PC-9 (cell line): ENCODE measurements at regions of chr1 and their contacts with region 1.

Region 1: DNA sequence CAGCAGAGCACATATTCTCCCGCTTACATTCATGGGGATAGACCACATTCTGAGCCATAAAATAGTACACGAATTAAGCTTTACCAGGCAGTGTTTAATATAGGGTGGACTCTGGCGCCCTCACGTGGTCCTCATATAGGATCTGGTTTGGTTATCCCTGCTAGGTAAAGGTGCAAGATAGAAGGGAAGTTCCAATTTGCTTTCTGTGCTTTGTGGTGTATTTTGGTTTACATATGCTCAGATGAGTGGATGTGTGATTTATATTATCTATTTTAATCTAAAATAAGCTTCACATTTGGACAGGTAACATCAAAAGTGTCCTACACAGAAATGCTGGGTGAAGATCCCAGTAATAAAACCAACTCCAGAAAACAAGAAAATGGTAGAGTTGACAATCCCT is 3.6 kb downstream of the CR1 start:
- DNase-seq: peak; percentile 62 to 64
- H3K4me3 ChIP-seq: no peak overlapping the region
- H3K27ac ChIP-seq: no peak overlapping the region
- H3K4me1 ChIP-seq: no peaks in the 10 kb centered on the region
- H3K27me3 ChIP-seq: peaks cover 28% of the 10 kb centered on the region
- CTCF ChIP-seq: peak; percentile 87

Region 2: GRCh38 chr1:206734499-206735142 is 765.0 kb before region 1 on chr1:
- CTCF ChIA-PET with region 1: no interaction called
- POLR2A ChIA-PET with region 1: no interaction called
- intact Hi-C with region 1: loop called (anchors 1 kb)
- DNase-seq: peak in 1 of 2 experiments; percentile 37
- H3K4me3 ChIP-seq: no peak overlapping the region
- H3K27ac ChIP-seq: no peak overlapping the region
- H3K4me1 ChIP-seq: no peaks in the 10 kb centered on the region
- H3K27me3 ChIP-seq: no peaks in the 10 kb centered on the region
- CTCF ChIP-seq: peak; percentile 89

Region 3: DNA sequence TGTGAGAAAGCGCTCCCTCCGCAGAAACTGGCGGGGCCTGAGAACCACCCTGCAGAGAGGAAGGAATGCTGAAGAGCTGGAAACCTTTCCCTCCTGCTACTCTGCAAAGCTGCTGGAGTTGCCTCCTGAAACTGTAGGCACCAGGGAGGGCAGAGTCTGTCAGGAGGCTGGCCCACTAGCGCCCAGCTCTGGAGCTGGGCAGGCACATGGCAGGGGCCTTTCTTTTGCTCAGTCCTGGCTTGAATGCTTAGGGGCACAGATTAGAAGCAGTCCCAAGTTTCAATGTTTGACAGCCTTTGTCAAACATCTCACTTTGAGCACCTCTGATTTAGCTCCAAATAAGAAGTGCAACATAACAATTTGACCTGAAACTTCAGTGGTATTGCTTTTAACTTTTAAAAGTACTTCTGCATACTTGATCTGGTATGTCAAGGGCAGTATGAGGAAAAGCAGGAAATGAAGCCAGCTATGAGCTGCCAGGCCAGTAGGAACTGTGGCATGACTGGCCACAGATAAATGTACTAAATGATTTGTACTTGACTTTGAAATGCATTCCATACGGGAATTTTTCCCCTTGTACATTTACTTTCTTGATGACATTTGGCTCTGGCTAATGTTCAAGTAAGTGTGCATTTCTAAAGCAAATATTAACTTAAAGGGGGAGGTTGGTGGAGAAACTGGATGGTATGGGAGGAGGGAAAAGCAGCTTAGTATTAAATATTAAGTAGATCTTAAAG is 474.3 kb before region 1 on chr1:
- CTCF ChIA-PET with region 1: no interaction called
- POLR2A ChIA-PET with region 1: no interaction called
- intact Hi-C with region 1: no loop called
- DNase-seq: peak; percentile 80 to 90
- H3K4me3 ChIP-seq: no peak overlapping the region
- H3K27ac ChIP-seq: peak overlapping the region; percentile 97
- H3K4me1 ChIP-seq: peaks cover 90% of the 10 kb centered on the region
- H3K27me3 ChIP-seq: no peaks in the 10 kb centered on the region
- CTCF ChIP-seq: no peak

Region 4: GRCh38 chr1:207077470-207078377 is 421.8 kb before region 1 on chr1:
- CTCF ChIA-PET with region 1: no interaction called
- POLR2A ChIA-PET with region 1: no interaction called
- intact Hi-C with region 1: loop called (anchors 2 kb)
- DNase-seq: peak; percentile 61 to 67
- H3K4me3 ChIP-seq: no peak overlapping the region
- H3K27ac ChIP-seq: no peak overlapping the region
- H3K4me1 ChIP-seq: no peaks in the 10 kb centered on the region
- H3K27me3 ChIP-seq: no peaks in the 10 kb centered on the region
- CTCF ChIP-seq: peak; percentile 95

Region 5: DNA sequence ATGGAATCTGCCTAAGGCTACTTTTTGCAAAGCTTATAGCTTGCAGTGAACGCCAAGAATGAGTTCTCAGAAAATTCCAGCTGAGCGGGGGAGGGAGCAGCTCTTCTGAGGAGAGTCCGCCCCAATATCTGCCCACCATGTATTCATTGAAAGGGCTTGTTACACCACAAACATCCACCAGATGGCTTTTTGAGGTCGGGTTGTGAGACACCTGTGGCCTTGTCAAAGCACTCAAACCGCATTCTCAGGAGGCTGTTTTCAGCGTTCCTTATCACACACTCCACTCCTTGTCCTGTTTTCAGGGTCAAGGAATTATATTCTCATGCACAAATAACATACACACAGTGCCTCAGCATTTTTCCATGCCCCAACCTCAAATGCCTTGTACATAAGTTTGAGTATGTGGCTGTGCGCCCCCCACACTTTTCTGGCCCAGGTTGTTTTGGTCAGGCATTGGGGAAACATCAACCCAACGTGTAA is 414.8 kb before region 1 on chr1:
- CTCF ChIA-PET with region 1: interaction called, 4 read pairs
- POLR2A ChIA-PET with region 1: no interaction called
- intact Hi-C with region 1: loop called (anchors 2 kb)
- DNase-seq: peak; percentile 55 to 59
- H3K4me3 ChIP-seq: no peak overlapping the region
- H3K27ac ChIP-seq: no peak overlapping the region
- H3K4me1 ChIP-seq: peaks cover 30% of the 10 kb centered on the region
- H3K27me3 ChIP-seq: no peaks in the 10 kb centered on the region
- CTCF ChIP-seq: peak; percentile 76

Region 6: GRCh38 chr1:207181838-207182237 is 317.7 kb before region 1 on chr1:
- CTCF ChIA-PET with region 1: no interaction called
- POLR2A ChIA-PET with region 1: no interaction called
- intact Hi-C with region 1: loop called (anchors 5 kb)
- DNase-seq: no peak
- H3K4me3 ChIP-seq: no peak overlapping the region
- H3K27ac ChIP-seq: no peak overlapping the region
- H3K4me1 ChIP-seq: no peaks in the 10 kb centered on the region
- H3K27me3 ChIP-seq: no peaks in the 10 kb centered on the region
- CTCF ChIP-seq: peak; percentile 45

Region 7: DNA sequence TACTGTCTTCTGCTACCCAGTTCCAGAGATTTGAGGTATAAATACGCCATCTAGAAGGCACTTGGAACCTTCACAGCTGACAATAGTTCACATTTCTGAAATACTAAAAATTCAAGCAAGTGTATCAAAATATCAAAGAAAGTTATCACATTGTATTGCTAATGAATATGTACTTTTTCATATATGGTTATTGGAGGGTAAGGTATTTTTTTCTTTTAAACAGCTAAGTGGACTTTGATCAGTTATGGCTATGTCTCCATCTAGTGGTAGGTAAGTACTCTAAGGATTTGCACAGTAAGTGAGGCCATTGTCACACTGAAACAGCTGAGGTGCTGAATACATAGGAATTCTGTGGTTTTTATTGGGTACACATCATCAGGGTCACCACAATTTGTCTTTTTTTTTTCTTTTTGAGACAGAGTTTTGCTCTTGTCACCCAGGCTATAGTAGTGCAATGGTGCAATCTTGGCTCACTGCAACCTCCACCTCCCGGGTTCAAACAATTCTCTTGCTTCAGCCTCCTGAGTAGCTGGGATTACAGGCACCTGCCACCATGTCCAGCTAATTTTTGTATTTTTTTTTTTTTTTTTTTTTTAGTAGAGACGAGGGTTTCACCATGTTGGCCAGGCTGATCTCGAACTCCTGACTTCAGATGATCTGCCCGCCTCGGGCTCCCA is 94.6 kb before region 1 on chr1:
- CTCF ChIA-PET with region 1: no interaction called
- POLR2A ChIA-PET with region 1: no interaction called
- intact Hi-C with region 1: loop called (anchors 1 kb)
- DNase-seq: peak in 1 of 2 experiments; percentile 76
- H3K4me3 ChIP-seq: no peak overlapping the region
- H3K27ac ChIP-seq: no peak overlapping the region
- H3K4me1 ChIP-seq: peaks cover 11% of the 10 kb centered on the region
- H3K27me3 ChIP-seq: no peaks in the 10 kb centered on the region
- CTCF ChIP-seq: peak; percentile 87

Region 8: GRCh38 chr1:207565546-207566358 is 66.2 kb after region 1 on chr1:
- CTCF ChIA-PET with region 1: no interaction called
- POLR2A ChIA-PET with region 1: interaction called, 14 read pairs
- intact Hi-C with region 1: no loop called
- DNase-seq: peak in 1 of 2 experiments; percentile 27
- H3K4me3 ChIP-seq: no peak overlapping the region
- H3K27ac ChIP-seq: no peak overlapping the region
- H3K4me1 ChIP-seq: no peaks in the 10 kb centered on the region
- H3K27me3 ChIP-seq: no peaks in the 10 kb centered on the region
- CTCF ChIP-seq: peak; percentile 54